ENCODE measurements at regions of chr11 and their contacts with region 1.

Region 1: GRCh38 chr11:118002541-118003423 is 16.6 kb downstream of the IL10RA start:
- DNase-seq: no peak
- H3K4me3 ChIP-seq: no peak overlapping the region
- H3K27ac ChIP-seq: no peak overlapping the region
- H3K4me1 ChIP-seq: no peaks in the 10 kb centered on the region
- H3K27me3 ChIP-seq: no peaks in the 10 kb centered on the region
- CTCF ChIP-seq: no peak
- POLR2A ChIP-seq: no peak

Region 2: DNA sequence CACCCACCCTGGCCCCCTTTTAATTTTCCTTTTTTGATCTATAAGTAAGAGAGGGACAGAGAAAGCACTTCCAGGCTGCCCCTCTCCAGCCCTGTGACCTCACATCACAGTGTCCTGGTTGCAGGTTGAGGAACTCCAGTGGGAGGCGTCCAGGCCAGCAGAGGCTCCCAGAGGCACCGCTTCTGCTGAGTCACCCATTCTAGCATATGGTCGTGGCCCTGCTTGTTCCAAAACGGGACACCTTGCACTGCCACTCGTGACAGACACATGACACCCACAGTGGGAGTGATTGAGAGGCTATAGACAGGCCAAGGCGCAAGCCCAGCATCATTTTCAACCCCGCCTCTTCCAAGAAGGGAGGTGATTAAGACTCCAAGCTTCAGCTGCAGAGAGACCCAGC is 58.1 kb after region 1 on chr11:
- CTCF ChIA-PET with region 1: no interaction called
- POLR2A ChIA-PET with region 1: no interaction called
- dilution Hi-C with region 1: no loop called
- intact Hi-C with region 1: loop called (anchors 10 kb)
- DNase-seq: no peak
- H3K4me3 ChIP-seq: no peak overlapping the region
- H3K27ac ChIP-seq: no peak overlapping the region
- H3K4me1 ChIP-seq: no peaks in the 10 kb centered on the region
- H3K27me3 ChIP-seq: no peaks in the 10 kb centered on the region
- CTCF ChIP-seq: no peak
- POLR2A ChIP-seq: no peak

Measured in endothelial cell of umbilical vein (primary cell).